Common myeloid progenitor, CD34-positive (primary cell): ENCODE measurements at regions of chr1 and their contacts with region 1.

Region 1: DNA sequence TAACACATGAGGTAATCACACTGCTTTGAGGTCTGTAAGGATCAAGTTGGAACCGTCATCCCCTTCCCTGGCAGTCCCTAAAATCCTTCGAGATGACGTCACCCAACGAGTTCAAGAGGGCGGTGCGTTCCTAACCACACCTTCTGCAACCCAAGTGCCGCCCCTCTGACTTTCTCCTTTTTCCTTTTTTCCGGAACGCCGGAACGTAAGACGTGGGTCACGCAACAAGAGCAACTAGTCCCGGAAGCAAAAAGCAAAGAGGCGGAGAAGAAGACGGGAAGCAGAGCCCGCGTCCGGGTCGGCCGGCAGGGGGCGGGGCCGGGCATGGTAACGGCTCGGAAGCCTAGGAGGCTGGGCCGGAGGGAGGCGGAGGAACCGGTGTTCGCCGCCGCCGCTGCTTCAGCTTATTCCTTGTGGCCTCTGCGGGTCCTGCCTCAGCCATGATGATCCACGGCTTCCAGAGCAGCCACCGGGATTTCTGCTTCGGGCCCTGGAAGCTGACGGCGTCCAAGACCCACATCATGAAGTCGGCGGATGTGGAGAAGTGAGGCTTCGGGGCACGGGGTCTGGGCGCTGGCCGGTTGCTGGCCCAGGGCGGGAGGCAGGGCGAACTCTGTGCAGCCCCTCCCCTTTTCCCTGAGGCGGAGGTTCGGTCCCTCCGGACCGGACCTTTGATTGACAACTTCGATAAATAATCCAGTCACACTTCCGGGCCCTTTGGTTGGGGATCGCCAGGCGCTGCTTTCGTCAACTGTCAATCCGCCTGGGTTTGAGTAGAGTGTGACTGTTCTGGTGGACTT is at the start of gene TIPRL:
- DNase-seq: peak; percentile 93 to 96 (median 95)
- H3K4me3 ChIP-seq: peak within 1 kb of the TSS; percentile 65 to 100 (median 95)
- H3K27ac ChIP-seq: peak within 1 kb of the TSS; percentile 73 to 91
- H3K4me1 ChIP-seq: peaks cover 5 to 21% (median 13%) of the 10 kb centered on the region in 4 experiments
- H3K27me3 ChIP-seq: no peaks in the 10 kb centered on the region

Region 2: GRCh38 chr1:168110896-168111545 is 67.8 kb before region 1 on chr1:
- CTCF ChIA-PET with region 1: no interaction called
- POLR2A ChIA-PET with region 1: no interaction called
- DNase-seq: no peak
- H3K4me3 ChIP-seq: no peak overlapping the region
- H3K27ac ChIP-seq: no peak overlapping the region
- H3K4me1 ChIP-seq: no peaks in the 10 kb centered on the region
- H3K27me3 ChIP-seq: no peaks in the 10 kb centered on the region

Region 3: DNA sequence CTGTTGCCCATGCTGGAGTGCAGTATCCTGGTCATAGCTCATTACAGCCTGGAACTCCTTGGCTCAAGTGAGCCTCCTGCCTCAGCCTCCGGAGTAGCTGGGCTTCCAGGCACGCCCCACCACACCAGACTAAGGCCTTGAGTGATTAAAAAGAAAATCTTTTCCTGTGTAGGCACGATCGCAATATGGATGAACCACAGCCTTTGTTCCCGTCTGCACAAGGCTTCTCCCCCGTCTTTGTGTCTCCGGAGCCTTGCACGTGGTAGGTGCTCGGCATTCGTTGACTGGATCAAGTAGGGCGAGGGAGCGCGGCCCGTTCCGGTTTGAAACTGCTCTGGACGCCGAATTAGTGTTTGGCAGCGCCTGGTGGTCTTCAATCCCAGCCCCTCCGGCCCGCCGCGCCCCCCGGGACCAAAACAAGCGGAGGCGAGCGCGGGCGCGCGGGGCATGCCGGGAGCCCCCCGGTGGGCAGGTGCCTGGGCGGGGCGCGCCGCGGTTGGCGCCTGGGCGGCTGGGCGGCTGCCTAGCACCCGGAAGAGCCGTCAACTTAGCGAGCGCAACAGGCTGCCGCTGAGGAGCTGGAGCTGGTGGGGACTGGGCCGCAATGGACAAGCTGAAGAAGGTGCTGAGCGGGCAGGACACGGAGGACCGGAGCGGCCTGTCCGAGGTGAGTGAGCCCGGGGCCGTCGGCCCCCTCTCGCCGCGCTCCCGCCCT is 46.8 kb after region 1 on chr1 and contains the start of gene SFT2D2:
- CTCF ChIA-PET with region 1: interaction called, 10 read pairs
- POLR2A ChIA-PET with region 1: no interaction called
- DNase-seq: peak; percentile 71 to 91 (median 86)
- H3K4me3 ChIP-seq: peak within 1 kb of the TSS; percentile 46 to 89 (median 80)
- H3K27ac ChIP-seq: peak within 1 kb of the TSS; percentile 53 to 78
- H3K4me1 ChIP-seq: peaks cover 12 to 40% (median 32%) of the 10 kb centered on the region in 4 experiments
- H3K27me3 ChIP-seq: no peaks in the 10 kb centered on the region